ENCODE measurements at regions of chr11 and their contacts with region 1.

Region 1: GRCh38 chr11:132620423-132620822 is 911.9 kb downstream of the OPCML start:
- DNase-seq: no peak
- H3K4me3 ChIP-seq: no peak overlapping the region
- H3K27ac ChIP-seq: no peak overlapping the region
- H3K4me1 ChIP-seq: peaks cover 4% of the 10 kb centered on the region
- H3K27me3 ChIP-seq: no peaks in the 10 kb centered on the region
- CTCF ChIP-seq: no peak

Region 2: GRCh38 chr11:132168344-132168981 is 452.0 kb before region 1 on chr11:
- CTCF ChIA-PET with region 1: no interaction called
- dilution Hi-C with region 1: no loop called
- in situ Hi-C with region 1: no loop called
- intact Hi-C with region 1: no loop called
- DNase-seq: no peak
- H3K4me3 ChIP-seq: no peak overlapping the region
- H3K27ac ChIP-seq: no peak overlapping the region
- H3K4me1 ChIP-seq: peaks cover 7% of the 10 kb centered on the region
- H3K27me3 ChIP-seq: no peaks in the 10 kb centered on the region
- CTCF ChIP-seq: no peak

Region 3: GRCh38 chr11:132655187-132655855 is 34.9 kb after region 1 on chr11:
- CTCF ChIA-PET with region 1: no interaction called
- dilution Hi-C with region 1: loop called (anchors 5 kb)
- in situ Hi-C with region 1: no loop called
- intact Hi-C with region 1: no loop called
- DNase-seq: no peak
- H3K4me3 ChIP-seq: no peak overlapping the region
- H3K27ac ChIP-seq: no peak overlapping the region
- H3K4me1 ChIP-seq: peaks cover 16% of the 10 kb centered on the region
- H3K27me3 ChIP-seq: no peaks in the 10 kb centered on the region
- CTCF ChIP-seq: no peak